ENCODE measurements at regions of chr9 and their contacts with region 1.

Region 1: DNA sequence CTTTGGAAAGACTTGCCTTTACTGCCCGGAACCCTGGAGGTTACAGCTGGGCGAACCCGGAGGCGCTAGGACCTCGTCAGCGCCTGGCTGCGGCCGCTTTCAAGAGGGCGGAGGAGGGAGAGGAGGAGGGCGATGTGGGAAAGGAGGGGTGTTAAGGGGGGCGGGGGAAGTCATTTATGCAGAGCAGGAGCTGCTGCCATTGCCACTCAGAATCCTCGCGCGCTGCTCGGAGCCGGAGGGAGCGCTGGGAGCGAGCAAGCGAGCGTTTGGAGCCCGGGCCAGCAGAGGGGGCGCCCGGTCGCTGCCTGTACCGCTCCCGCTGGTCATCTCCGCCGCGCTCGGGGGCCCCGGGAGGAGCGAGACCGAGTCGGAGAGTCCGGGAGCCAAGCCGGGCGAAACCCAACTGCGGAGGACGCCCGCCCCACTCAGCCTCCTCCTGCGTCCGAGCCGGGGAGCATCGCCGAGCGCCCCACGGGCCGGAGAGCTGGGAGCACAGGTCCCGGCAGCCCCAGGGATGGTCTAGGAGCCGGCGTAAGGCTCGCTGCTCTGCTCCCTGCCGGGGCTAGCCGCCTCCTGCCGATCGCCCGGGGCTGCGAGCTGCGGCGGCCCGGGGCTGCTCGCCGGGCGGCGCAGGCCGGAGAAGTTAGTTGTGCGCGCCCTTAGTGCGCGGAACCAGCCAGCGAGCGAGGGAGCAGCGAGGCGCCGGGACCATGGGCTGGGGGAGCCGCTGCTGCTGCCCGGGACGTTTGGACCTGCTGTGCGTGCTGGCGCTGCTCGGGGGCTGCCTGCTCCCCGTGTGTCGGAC is at the start of gene PCSK5:
- DNase-seq: peak; percentile 75 to 95 (median 90)
- ATAC-seq: peak; percentile 85 to 87
- H3K4me3 Mint-ChIP-seq: peak within 1 kb of the TSS; percentile 93 to 98 (median 97)
- H3K27ac Mint-ChIP-seq: peak within 1 kb of the TSS; percentile 79 to 96 (median 93)
- H3K4me1 Mint-ChIP-seq: peaks cover 34 to 68% (median 52%) of the 10 kb centered on the region in 4 donors
- H3K27me3 Mint-ChIP-seq: peaks cover 0 to 21% (median 0%) of the 10 kb centered on the region in 5 donors
- polyA plus RNA-seq, gene PCSK5: 6.5 to 14.7 (median 13.1) TPM

Region 2: GRCh38 chr9:75812141-75812540 is 78.5 kb before region 1 on chr9:
- POLR2A ChIA-PET with region 1: no interaction called
- DNase-seq: no peak
- ATAC-seq: no peak
- H3K4me3 Mint-ChIP-seq: no peak overlapping the region
- H3K27ac Mint-ChIP-seq: no peak overlapping the region
- H3K4me1 Mint-ChIP-seq: no peaks in the 10 kb centered on the region
- H3K27me3 Mint-ChIP-seq: peaks cover 0 to 16% (median 3%) of the 10 kb centered on the region in 5 donors

Region 3: GRCh38 chr9:75844321-75844720 is 46.4 kb before region 1 on chr9:
- POLR2A ChIA-PET with region 1: no interaction called
- DNase-seq: no peak
- ATAC-seq: no peak
- H3K4me3 Mint-ChIP-seq: no peak overlapping the region
- H3K27ac Mint-ChIP-seq: no peak overlapping the region
- H3K4me1 Mint-ChIP-seq: no peaks in the 10 kb centered on the region
- H3K27me3 Mint-ChIP-seq: peaks cover 0 to 2% (median 0%) of the 10 kb centered on the region in 5 donors

Region 4: GRCh38 chr9:75869236-75869635 is 21.4 kb before region 1 on chr9:
- POLR2A ChIA-PET with region 1: interaction called, 13 read pairs
- DNase-seq: no peak
- ATAC-seq: no peak
- H3K4me3 Mint-ChIP-seq: peak overlapping the region in 1 of 10 donors; percentile 0
- H3K27ac Mint-ChIP-seq: peak overlapping the region in 2 of 10 donors; percentile 6 to 52
- H3K4me1 Mint-ChIP-seq: peaks cover 20 to 35% (median 27%) of the 10 kb centered on the region in 4 donors
- H3K27me3 Mint-ChIP-seq: peaks cover 0 to 1% (median 0%) of the 10 kb centered on the region in 5 donors

Region 5: DNA sequence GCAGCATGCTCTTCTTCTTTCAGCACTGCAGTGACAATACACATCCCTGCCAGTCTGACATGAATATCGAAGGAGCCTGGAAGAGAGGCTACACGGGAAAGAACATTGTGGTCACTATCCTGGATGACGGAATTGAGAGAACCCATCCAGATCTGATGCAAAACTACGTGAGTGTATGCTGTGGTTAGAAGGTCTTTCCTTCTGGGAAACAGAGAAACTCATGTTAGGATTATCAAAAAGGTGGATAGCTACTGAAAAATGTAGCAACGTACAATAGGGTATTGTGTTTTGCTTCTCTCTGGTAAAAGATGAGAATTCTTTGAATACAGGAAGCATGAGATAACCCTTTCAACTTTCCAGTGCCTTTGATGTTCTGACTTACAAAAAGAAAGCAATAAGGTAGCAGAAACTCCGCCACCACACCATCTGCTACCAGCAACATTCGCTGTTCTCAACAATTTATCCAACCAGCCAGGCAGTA is 133.1 kb after region 1 on chr9:
- POLR2A ChIA-PET with region 1: interaction called, 17 read pairs
- DNase-seq: peak; percentile 8 to 85 (median 60)
- ATAC-seq: peak; percentile 83 to 90
- H3K4me3 Mint-ChIP-seq: peak overlapping the region; percentile 64 to 87 (median 78)
- H3K27ac Mint-ChIP-seq: peak overlapping the region; percentile 78 to 99 (median 97)
- H3K4me1 Mint-ChIP-seq: peaks cover 60 to 98% (median 95%) of the 10 kb centered on the region in 4 donors
- H3K27me3 Mint-ChIP-seq: no peaks in the 10 kb centered on the region

Measured in naive thymus-derived CD8-positive, alpha-beta T cell (primary cell).